ENCODE measurements at regions of chr4 and their contacts with region 1.

Region 1: GRCh38 chr4:91113130-91113706 is 986.0 kb downstream of the CCSER1 start:
- DNase-seq: peak in 1 of 2 experiments; percentile 23
- H3K4me3 ChIP-seq: no peak overlapping the region
- H3K4me3 Mint-ChIP-seq: no peak overlapping the region
- H3K27ac Mint-ChIP-seq: no peak overlapping the region
- H3K4me1 ChIP-seq: no peaks in the 10 kb centered on the region
- H3K4me1 Mint-ChIP-seq: no peaks in the 10 kb centered on the region
- H3K27me3 ChIP-seq: no peaks in the 10 kb centered on the region
- H3K27me3 Mint-ChIP-seq: no peaks in the 10 kb centered on the region
- CTCF ChIP-seq: peak; percentile 47 to 78

Region 2: DNA sequence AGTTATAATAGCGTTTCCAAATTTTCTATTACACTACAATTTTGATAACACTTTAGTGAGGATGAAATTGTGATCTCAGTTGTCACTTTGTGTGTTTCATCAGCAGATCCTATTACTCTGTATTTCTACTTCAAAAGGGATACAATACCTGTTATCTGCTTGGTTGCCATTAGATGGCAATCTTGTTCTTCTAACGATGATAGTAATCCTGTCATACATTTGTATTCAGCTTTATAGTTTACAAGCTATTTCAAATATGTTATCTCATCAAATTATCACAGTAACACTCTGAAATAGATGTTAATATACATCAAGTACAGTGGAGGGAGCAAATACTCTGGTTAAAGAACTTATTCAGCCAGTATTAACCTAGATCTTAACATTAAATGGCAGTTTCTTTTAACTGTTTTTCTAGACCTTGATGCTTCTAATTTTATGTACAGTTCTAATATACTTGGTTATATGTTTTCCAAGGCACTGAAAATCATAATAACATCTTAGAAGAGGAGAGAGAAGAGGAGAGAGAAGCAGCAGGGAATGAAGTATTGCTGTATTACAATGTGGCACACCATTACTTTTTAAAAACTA is 694.0 kb before region 1 on chr4:
- CTCF ChIA-PET with region 1: no interaction called
- POLR2A ChIA-PET with region 1: no interaction called
- intact Hi-C with region 1: loop called (anchors 1 kb)
- DNase-seq: peak in 1 of 2 experiments; percentile 5
- H3K4me3 ChIP-seq: no peak overlapping the region
- H3K4me3 Mint-ChIP-seq: no peak overlapping the region
- H3K27ac Mint-ChIP-seq: no peak overlapping the region
- H3K4me1 ChIP-seq: no peaks in the 10 kb centered on the region
- H3K4me1 Mint-ChIP-seq: no peaks in the 10 kb centered on the region
- H3K27me3 ChIP-seq: no peaks in the 10 kb centered on the region
- H3K27me3 Mint-ChIP-seq: no peaks in the 10 kb centered on the region
- CTCF ChIP-seq: peak; percentile 45 to 52

Region 3: DNA sequence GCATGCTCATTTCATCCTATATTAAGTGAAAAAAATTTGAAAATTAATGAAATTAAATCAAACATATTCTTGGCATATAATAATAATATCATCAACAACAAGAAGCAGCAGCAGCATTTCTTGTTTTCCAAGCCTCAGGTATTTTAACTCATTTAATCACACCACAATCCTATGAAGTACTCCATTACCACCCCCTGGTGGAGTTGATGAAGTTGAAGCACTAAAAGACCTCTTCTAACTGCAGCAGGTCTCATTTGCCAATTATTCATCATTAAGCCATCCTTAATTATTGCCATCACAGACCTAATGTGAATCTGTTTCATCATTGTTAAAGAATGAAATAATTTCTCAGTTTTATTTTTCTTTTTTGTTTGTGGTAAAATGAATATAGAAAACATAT is 389.1 kb after region 1 on chr4:
- CTCF ChIA-PET with region 1: no interaction called
- POLR2A ChIA-PET with region 1: no interaction called
- intact Hi-C with region 1: loop called (anchors 1 kb)
- DNase-seq: peak in 1 of 2 experiments; percentile 10
- H3K4me3 ChIP-seq: no peak overlapping the region
- H3K4me3 Mint-ChIP-seq: no peak overlapping the region
- H3K27ac Mint-ChIP-seq: no peak overlapping the region
- H3K4me1 ChIP-seq: no peaks in the 10 kb centered on the region
- H3K4me1 Mint-ChIP-seq: no peaks in the 10 kb centered on the region
- H3K27me3 ChIP-seq: no peaks in the 10 kb centered on the region
- H3K27me3 Mint-ChIP-seq: no peaks in the 10 kb centered on the region
- CTCF ChIP-seq: no peak

Region 4: GRCh38 chr4:91734682-91735081 is 621.5 kb after region 1 on chr4:
- CTCF ChIA-PET with region 1: no interaction called
- POLR2A ChIA-PET with region 1: no interaction called
- intact Hi-C with region 1: loop called (anchors 1 kb)
- DNase-seq: peak in 1 of 2 experiments; percentile 2
- H3K4me3 ChIP-seq: no peak overlapping the region
- H3K4me3 Mint-ChIP-seq: no peak overlapping the region
- H3K27ac Mint-ChIP-seq: no peak overlapping the region
- H3K4me1 ChIP-seq: no peaks in the 10 kb centered on the region
- H3K4me1 Mint-ChIP-seq: no peaks in the 10 kb centered on the region
- H3K27me3 ChIP-seq: no peaks in the 10 kb centered on the region
- H3K27me3 Mint-ChIP-seq: no peaks in the 10 kb centered on the region
- CTCF ChIP-seq: peak; percentile 8 to 13

Region 5: DNA sequence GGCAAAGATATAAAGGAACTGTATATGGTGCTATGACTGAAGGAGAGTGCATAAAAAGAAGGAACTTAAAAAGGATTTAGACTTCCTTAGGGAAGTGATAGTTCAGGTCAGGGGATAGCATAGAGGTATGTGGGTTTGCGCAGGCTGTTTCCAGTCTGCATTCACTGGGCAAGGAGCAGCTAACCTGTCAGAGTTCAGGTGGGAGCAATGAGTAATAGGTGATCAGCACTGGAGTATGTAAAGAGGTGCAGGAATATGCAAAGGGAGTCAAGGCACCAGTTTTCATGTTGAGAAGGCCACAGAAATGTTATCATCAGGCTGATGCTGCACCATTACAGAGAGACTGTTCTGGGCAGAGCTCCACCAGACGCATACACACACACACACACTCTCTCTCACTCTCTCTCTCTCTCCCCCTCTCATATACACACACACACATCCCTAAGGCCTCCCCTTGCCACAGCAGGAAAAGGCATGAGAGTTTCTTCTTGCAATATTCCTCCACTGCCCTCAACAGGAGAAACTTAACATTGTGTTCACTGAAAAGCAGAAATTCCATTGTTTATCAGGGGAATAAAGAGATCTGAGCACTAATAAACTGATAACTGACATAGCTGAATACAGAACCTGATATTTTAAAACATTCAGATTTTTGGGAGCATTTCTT is 934.1 kb after region 1 on chr4:
- CTCF ChIA-PET with region 1: no interaction called
- POLR2A ChIA-PET with region 1: no interaction called
- intact Hi-C with region 1: loop called (anchors 5 kb)
- DNase-seq: peak in 1 of 2 experiments; percentile 16
- H3K4me3 ChIP-seq: no peak overlapping the region
- H3K4me3 Mint-ChIP-seq: no peak overlapping the region
- H3K27ac Mint-ChIP-seq: no peak overlapping the region
- H3K4me1 ChIP-seq: no peaks in the 10 kb centered on the region
- H3K4me1 Mint-ChIP-seq: no peaks in the 10 kb centered on the region
- H3K27me3 ChIP-seq: no peaks in the 10 kb centered on the region
- H3K27me3 Mint-ChIP-seq: no peaks in the 10 kb centered on the region
- CTCF ChIP-seq: no peak

Region 6: GRCh38 chr4:92163348-92163747 is 1050.1 kb after region 1 on chr4:
- CTCF ChIA-PET with region 1: no interaction called
- POLR2A ChIA-PET with region 1: no interaction called
- intact Hi-C with region 1: loop called (anchors 5 kb)
- DNase-seq: no peak
- H3K4me3 ChIP-seq: no peak overlapping the region
- H3K4me3 Mint-ChIP-seq: no peak overlapping the region
- H3K27ac Mint-ChIP-seq: no peak overlapping the region
- H3K4me1 ChIP-seq: no peaks in the 10 kb centered on the region
- H3K4me1 Mint-ChIP-seq: no peaks in the 10 kb centered on the region
- H3K27me3 ChIP-seq: no peaks in the 10 kb centered on the region
- H3K27me3 Mint-ChIP-seq: no peaks in the 10 kb centered on the region
- CTCF ChIP-seq: no peak

Measured in Caco-2 (cell line).